PC-3 (cell line): ENCODE measurements at regions of chr3 and their contacts with region 1.

Region 1: DNA sequence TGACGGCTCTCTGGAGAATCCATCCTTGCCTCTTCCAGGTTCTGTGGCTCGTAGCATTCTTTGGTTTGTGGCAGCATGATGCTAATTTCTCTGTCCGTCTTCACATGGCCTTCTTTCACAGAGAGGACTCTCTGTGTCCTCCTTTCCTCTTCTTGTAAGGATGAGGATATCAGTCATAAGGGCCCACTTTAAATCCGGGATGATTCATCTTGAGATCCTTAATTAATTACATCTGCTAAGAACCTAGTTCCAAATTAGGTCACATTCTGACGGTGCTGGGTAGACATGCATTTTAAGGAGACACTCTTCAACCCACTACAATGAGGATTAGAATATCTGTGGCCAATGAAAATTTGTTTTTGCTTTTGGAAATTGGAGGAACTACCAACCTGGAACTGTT is 15.7 kb upstream of the GXYLT2 start:
- DNase-seq: no peak
- ATAC-seq: no peak
- H3K4me3 ChIP-seq: no peak overlapping the region
- H3K27ac ChIP-seq: no peak overlapping the region
- H3K4me1 ChIP-seq: no peaks in the 10 kb centered on the region
- H3K27me3 ChIP-seq: peaks cover 16% of the 10 kb centered on the region
- CTCF ChIP-seq: no peak

Region 2: GRCh38 chr3:71734883-71735282 is 1137.3 kb before region 1 on chr3:
- CTCF ChIA-PET with region 1: no interaction called
- POLR2A ChIA-PET with region 1: interaction called, 17 read pairs
- intact Hi-C with region 1: no loop called
- DNase-seq: no peak
- ATAC-seq: no peak
- H3K4me3 ChIP-seq: no peak overlapping the region
- H3K27ac ChIP-seq: no peak overlapping the region
- H3K4me1 ChIP-seq: no peaks in the 10 kb centered on the region
- H3K27me3 ChIP-seq: peaks cover 61% of the 10 kb centered on the region
- CTCF ChIP-seq: no peak

Region 3: GRCh38 chr3:71955240-71956068 is 916.7 kb before region 1 on chr3:
- CTCF ChIA-PET with region 1: no interaction called
- POLR2A ChIA-PET with region 1: no interaction called
- intact Hi-C with region 1: loop called (anchors 1 kb)
- DNase-seq: peak; percentile 85
- ATAC-seq: peak; percentile 62
- H3K4me3 ChIP-seq: no peak overlapping the region
- H3K27ac ChIP-seq: no peak overlapping the region
- H3K4me1 ChIP-seq: peaks cover 4% of the 10 kb centered on the region; the same call in 1 of the 2 replicates
- H3K27me3 ChIP-seq: peaks cover 44% of the 10 kb centered on the region
- CTCF ChIP-seq: peak; percentile 92